ENCODE measurements at regions of chr2 and their contacts with region 1.

Region 1: GRCh38 chr2:59560769-59561168 is 992.7 kb downstream of the BCL11A start:
- DNase-seq: no peak
- H3K4me3 ChIP-seq: no peak overlapping the region
- H3K27ac ChIP-seq: no peak overlapping the region
- H3K4me1 ChIP-seq: no peaks in the 10 kb centered on the region
- H3K27me3 ChIP-seq: no peaks in the 10 kb centered on the region
- CTCF ChIP-seq: no peak

Region 2: GRCh38 chr2:59083075-59083828 is 477.5 kb before region 1 on chr2:
- intact Hi-C with region 1: loop called (anchors 10 kb)
- DNase-seq: no peak
- H3K4me3 ChIP-seq: no peak overlapping the region
- H3K27ac ChIP-seq: no peak overlapping the region
- H3K4me1 ChIP-seq: no peaks in the 10 kb centered on the region
- H3K27me3 ChIP-seq: no peaks in the 10 kb centered on the region
- CTCF ChIP-seq: no peak

Region 3: DNA sequence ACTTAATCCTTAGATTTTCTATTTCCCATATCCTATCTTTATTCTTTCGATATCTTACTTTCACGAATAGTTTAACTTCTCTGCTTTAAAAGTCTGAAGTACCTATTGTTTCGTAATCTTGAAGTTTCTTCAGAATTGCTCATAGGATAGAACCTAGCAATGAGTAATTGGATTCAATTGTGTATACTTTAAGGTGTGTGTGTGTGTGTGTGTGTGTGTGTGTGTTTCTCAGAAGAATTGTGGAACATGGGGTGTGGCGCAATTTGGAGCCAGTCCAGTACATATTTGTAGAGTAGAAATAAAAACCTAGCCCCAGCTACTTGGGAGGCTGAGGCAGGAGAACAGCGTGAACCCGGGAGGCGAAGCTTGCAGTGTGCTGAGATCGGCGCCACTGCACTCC is 95.0 kb after region 1 on chr2:
- intact Hi-C with region 1: no loop called
- DNase-seq: no peak
- H3K4me3 ChIP-seq: no peak overlapping the region
- H3K27ac ChIP-seq: no peak overlapping the region
- H3K4me1 ChIP-seq: no peaks in the 10 kb centered on the region
- H3K27me3 ChIP-seq: no peaks in the 10 kb centered on the region
- CTCF ChIP-seq: no peak

Region 4: GRCh38 chr2:60463249-60463648 is 902.5 kb after region 1 on chr2:
- intact Hi-C with region 1: no loop called
- DNase-seq: no peak
- H3K4me3 ChIP-seq: no peak overlapping the region
- H3K27ac ChIP-seq: no peak overlapping the region
- H3K4me1 ChIP-seq: no peaks in the 10 kb centered on the region
- H3K27me3 ChIP-seq: peaks cover 0 to 12% of the 10 kb centered on the region in 2 donors
- CTCF ChIP-seq: no peak